ENCODE measurements at regions of chr15 and their contacts with region 1.

Region 1: GRCh38 chr15:40893733-40894688 is at the start of gene VPS18:
- DNase-seq: peak; percentile 99
- ATAC-seq: peak; percentile 99
- H3K4me3 Mint-ChIP-seq: peak within 1 kb of the TSS; percentile 94
- H3K27ac Mint-ChIP-seq: peak within 1 kb of the TSS; percentile 92
- H3K4me1 Mint-ChIP-seq: peaks cover 28% of the 10 kb centered on the region
- H3K27me3 Mint-ChIP-seq: no peaks in the 10 kb centered on the region
- CTCF ChIP-seq: peak; percentile 89
- total RNA-seq, gene VPS18: 6.1 TPM

Region 2: DNA sequence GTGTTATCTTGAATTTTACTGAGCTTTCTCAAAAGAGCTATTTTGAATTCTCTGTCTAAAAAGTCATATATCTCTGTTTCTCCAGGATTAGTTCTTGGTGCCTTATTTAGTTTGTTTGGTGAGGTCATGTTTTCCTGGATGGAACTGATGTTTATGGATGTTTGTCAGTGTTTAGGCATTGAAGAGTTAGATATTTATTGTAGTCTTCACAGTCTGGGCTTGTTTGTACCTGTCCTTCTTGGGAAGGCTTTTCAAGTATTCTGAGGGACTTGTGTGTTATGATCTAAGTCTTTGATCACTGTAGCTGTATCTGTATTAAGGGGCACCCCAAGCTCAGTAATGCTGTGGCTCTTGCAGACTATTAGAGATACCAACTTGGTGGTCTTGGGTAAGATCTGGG is 209.6 kb before region 1 on chr15:
- CTCF ChIA-PET with region 1: interaction called, 4 read pairs
- POLR2A ChIA-PET with region 1: no interaction called
- intact Hi-C with region 1: loop called (anchors 10 kb)
- DNase-seq: no peak
- ATAC-seq: no peak
- H3K4me3 Mint-ChIP-seq: no peak overlapping the region
- H3K27ac Mint-ChIP-seq: no peak overlapping the region
- H3K4me1 Mint-ChIP-seq: no peaks in the 10 kb centered on the region
- H3K27me3 Mint-ChIP-seq: no peaks in the 10 kb centered on the region
- CTCF ChIP-seq: no peak

Region 3: DNA sequence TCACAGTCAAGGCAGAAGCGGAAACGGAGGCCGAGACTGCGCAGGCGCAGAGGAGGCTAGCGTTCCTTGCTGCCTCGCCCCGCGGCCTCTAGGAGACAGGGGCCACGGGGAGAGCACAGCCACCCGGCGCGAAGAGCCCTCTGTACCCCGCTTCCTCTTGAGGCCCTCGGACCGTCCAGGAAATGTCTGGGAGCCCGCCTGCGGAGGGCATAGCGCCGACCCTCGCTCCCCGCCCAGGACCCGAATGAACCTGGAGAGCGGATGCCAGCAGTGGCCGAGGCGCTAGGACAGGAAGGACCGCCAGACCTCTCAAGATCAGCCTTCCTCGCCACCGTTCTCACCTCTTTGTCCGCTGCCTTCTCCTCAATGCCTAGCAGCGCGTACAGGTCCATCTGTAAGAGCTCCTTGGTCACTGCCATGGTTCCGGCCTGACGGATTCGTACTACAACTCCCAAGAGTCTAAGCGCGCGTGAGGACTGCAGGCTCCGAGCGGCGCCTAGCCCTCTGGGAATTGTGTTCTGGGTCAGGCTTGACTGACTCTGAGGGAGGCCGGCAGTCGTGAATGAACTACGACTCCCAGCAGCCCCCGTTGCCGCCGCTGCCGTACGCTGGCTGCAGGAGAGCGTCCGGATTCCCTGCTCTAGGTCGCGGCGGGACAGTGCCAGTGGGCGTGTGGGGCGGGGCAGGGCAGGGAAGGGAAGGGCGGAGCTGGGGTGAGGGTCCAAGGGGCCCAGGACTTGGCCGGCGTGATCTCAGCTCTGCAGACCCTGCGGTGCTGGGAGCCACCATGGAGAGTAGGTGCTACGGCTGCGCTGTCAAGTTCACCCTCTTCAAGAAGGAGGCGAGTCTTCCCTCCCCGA is 86.8 kb before region 1 on chr15 and contains the starts of genes DNAJC17 and ZFYVE19:
- CTCF ChIA-PET with region 1: interaction called, 3 read pairs
- POLR2A ChIA-PET with region 1: interaction called, 10 read pairs
- intact Hi-C with region 1: no loop called
- DNase-seq: peak; percentile 97
- ATAC-seq: peak; percentile 97
- H3K4me3 Mint-ChIP-seq: peak within 1 kb of the TSS; percentile 78
- H3K27ac Mint-ChIP-seq: peak within 1 kb of the TSS; percentile 99
- H3K4me1 Mint-ChIP-seq: peaks cover 20% of the 10 kb centered on the region
- H3K27me3 Mint-ChIP-seq: no peaks in the 10 kb centered on the region
- CTCF ChIP-seq: no peak
- total RNA-seq, gene DNAJC17: 35.8 to 35.9 TPM
- total RNA-seq, gene ZFYVE19: 20.1 to 22.7 TPM

Region 4: DNA sequence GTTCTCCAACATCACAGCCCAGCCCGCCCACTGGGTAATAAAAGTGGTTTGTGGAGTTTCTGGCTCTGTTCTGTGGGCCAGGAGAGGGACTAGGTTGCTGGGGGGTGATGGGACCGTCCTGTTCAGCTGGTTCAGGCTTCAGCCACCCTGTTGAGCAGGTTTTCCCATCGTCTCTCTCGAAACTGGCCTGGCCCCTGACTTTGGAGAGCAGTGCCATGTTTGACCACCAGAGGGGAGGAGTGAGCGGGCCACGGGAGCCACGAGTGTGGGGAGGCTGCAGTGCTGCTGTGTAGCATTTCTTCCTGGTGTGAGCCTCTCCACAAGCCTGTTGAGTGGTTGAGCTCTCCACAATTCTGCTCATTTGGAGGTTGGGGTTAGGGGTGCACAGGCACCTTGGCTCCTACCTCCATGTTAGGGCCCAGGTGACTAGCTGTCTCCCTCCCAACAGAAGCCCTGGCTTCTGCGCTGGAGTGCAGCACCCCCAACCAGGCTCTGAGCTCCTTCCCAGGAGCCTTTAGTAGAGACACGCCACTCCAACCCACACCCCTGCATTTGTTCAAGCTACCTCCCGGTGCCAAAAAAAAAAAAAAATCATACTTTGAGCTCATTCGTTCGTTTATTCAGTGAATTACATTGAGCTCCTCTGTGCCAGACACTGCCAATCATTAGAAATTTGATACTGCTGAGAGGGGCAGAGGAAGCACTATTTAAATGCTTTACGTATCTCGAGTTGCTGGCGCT is 36.2 kb before region 1 on chr15:
- CTCF ChIA-PET with region 1: no interaction called
- POLR2A ChIA-PET with region 1: interaction called, 45 read pairs
- intact Hi-C with region 1: loop called (anchors 2 kb)
- DNase-seq: peak; percentile 86
- ATAC-seq: peak; percentile 95
- H3K4me3 Mint-ChIP-seq: no peak overlapping the region
- H3K27ac Mint-ChIP-seq: no peak overlapping the region
- H3K4me1 Mint-ChIP-seq: peaks cover 5% of the 10 kb centered on the region
- H3K27me3 Mint-ChIP-seq: no peaks in the 10 kb centered on the region
- CTCF ChIP-seq: peak; percentile 88

Region 5: DNA sequence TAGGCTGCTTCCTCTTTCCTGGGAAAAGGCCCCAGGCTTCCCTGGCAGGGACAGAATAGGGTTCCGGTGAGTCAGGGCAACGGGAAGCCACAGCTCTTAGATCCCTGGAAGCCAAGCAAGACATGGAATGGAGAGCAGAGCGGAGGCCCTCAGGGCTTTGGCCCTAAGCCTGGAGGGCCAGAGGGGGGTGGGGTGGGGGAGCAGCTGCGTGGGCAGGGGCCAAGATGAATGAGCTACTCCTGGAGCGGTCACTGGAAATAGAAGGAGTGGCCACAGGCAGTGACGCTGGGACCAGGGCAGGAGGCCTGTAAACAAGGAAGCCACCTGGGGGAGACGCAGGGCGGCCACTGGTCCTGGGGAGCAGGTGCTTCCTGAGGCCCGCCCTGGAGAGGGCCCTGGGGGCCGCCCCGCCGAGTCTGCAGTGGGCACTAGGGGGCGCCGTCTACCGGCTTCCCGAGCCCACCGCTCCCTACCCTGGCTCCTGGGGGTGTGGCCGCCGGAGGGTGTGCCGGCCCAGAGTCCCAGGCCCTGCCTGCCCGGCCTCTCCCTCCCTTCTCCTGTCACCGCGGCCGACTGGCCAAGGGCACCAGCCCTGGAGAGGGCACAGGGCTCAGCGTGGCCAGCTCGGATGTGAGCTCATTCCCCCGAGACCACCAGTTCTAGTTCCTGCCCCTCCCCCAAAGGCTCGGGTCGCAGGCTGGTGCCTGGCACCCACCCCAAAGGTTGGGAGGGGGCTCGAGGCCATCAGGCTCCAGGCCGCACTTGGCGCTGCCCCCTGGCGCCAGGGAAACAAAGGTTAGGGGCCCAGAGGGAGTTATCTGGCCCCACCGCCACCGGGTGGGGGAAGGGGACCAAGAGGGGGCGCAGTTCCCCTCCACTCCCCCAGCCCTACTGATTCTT is 12.3 kb after region 1 on chr15:
- CTCF ChIA-PET with region 1: interaction called, 112 read pairs
- POLR2A ChIA-PET with region 1: interaction called, 15 read pairs
- intact Hi-C with region 1: no loop called
- DNase-seq: peak; percentile 89
- ATAC-seq: peak; percentile 79
- H3K4me3 Mint-ChIP-seq: peak overlapping the region; percentile 74
- H3K27ac Mint-ChIP-seq: peak overlapping the region; percentile 85
- H3K4me1 Mint-ChIP-seq: peaks cover 23% of the 10 kb centered on the region
- H3K27me3 Mint-ChIP-seq: no peaks in the 10 kb centered on the region
- CTCF ChIP-seq: peak; percentile 91

Region 6: GRCh38 chr15:40992241-40992741 is 98.3 kb after region 1 on chr15:
- CTCF ChIA-PET with region 1: no interaction called
- POLR2A ChIA-PET with region 1: no interaction called
- intact Hi-C with region 1: no loop called
- DNase-seq: no peak
- ATAC-seq: no peak
- H3K4me3 Mint-ChIP-seq: no peak overlapping the region
- H3K27ac Mint-ChIP-seq: peak overlapping the region; percentile 5
- H3K4me1 Mint-ChIP-seq: peaks cover 28% of the 10 kb centered on the region
- H3K27me3 Mint-ChIP-seq: no peaks in the 10 kb centered on the region
- CTCF ChIP-seq: no peak